ENCODE measurements at regions of chr17 and their contacts with region 1.

Region 1: GRCh38 chr17:50547035-50547735 is at the start of gene SPATA20:
- DNase-seq: peak; percentile 63
- H3K4me3 ChIP-seq: peak within 1 kb of the TSS; percentile 73
- H3K27ac ChIP-seq: no peak within 1 kb of the TSS
- H3K27me3 ChIP-seq: no peaks in the 10 kb centered on the region
- CTCF ChIP-seq: peak; percentile 95
- polyA plus RNA-seq, gene SPATA20: 17.1 and 25.1 TPM in 2 replicates

Region 2: DNA sequence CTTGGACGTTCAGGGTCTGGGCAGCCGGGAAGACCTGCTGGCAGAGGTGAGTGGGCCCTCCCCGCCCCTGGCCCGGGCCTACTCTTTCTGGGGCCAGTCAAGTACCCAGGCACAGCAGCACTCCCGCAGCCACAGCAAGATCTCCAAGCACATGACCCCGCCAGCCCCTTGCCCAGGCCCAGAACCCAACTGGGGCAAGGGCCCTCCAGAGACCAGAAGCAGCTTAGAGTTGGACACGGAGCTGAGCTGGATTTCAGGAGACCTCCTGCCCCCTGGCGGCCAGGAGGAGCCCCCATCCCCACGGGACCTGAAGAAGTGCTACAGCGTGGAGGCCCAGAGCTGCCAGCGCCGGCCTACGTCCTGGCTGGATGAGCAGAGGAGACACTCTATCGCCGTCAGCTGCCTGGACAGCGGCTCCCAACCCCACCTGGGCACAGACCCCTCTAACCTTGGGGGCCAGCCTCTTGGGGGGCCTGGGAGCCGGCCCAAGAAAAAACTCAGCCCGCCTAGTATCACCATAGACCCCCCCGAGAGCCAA is 78.9 kb after region 1 on chr17:
- CTCF ChIA-PET with region 1: interaction called, 134 read pairs
- POLR2A ChIA-PET with region 1: interaction called, 7 read pairs
- DNase-seq: peak; percentile 37
- H3K4me3 ChIP-seq: no peak overlapping the region
- H3K27ac ChIP-seq: no peak overlapping the region
- H3K27me3 ChIP-seq: peaks cover 6% of the 10 kb centered on the region
- CTCF ChIP-seq: peak; percentile 76

Region 3: DNA sequence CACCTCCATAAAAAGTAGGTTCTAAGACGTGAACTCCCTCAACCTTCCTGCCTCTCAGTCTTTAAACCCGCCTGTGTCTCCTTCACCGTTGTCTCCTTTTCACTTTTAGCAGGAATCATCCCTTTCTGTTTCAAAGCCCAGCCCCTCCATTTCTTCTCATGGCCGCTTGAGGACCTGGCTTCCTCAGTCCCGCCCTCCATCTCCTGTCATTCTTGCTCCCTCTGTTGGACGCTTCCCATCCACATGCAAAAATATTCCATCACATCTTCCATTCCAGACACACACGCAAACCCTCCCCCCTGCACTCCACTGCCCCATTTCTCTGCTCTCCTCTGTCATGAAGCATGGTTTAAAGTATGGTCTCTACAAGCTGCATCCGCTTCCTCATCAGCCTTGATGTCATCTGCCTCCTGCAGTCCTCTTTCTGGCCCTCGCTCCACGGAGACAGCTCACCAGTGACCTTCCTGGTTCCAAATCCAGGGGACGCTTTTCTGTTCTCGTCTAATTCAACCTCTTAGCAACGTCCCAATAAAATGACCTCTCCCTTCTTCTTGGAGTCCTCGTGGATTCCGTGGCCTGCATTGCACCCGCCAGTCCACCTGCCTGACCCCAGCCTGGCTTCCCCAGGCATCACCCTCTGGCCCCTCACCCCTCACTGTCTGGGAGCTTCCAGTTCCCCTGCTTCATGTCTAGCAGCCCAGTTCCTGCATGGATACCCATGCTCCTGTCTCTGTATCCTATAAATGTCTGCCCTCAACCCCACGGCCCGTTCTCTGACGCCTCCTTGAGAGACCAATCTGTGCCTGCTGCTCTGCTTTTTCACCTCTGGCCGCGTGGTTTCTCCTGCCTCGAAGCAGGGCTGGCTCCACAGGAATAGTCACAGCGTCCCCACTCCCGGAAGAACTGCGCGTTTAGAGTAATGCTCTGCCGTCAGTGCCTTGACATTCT is 134.4 kb after region 1 on chr17:
- CTCF ChIA-PET with region 1: interaction called, 28 read pairs
- POLR2A ChIA-PET with region 1: no interaction called
- DNase-seq: peak; percentile 55
- H3K4me3 ChIP-seq: no peak overlapping the region
- H3K27ac ChIP-seq: peak overlapping the region; percentile 21
- H3K27me3 ChIP-seq: no peaks in the 10 kb centered on the region
- CTCF ChIP-seq: peak; percentile 81

Region 4: GRCh38 chr17:50697663-50698274 is 150.6 kb after region 1 on chr17:
- CTCF ChIA-PET with region 1: interaction called, 192 read pairs
- POLR2A ChIA-PET with region 1: interaction called, 6 read pairs
- DNase-seq: no peak
- H3K4me3 ChIP-seq: no peak overlapping the region
- H3K27ac ChIP-seq: no peak overlapping the region
- H3K27me3 ChIP-seq: no peaks in the 10 kb centered on the region
- CTCF ChIP-seq: no peak

Region 5: DNA sequence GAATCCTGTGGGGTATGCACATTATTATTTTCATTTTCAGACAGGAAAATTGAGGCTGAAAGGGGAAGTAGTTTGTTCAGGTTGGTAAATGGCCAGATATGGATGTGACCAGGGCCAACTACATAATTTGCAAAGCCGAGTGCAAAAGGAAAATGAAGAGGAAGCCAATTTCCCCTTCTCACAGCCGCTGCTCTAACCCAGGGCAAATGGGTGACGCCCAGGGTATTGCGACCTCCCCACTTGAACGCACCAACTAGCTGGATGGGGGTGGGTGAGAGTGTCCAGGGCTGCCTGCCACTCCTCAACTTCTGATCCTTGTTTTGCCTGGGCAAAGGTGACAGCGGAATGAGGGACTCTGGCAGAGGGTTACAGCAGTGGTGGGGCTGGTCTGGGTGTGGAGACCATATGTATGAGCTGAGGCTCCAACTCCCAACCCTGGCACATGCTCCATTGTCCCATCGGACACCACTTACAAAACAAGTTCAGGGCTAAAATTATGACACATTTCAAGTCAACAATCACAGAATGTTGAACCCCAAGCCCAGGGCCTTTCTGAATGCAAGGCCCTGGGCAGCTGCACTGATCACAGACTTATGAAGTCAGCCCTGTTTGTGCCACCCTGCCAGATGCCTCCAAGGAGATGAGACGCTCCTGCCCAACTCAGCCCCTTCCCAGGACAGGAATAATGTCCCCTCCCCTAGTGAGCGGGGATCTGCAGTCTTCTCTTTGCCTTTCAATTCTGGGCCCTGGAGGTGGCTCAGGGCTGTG is 218.5 kb after region 1 on chr17:
- CTCF ChIA-PET with region 1: interaction called, 10 read pairs
- POLR2A ChIA-PET with region 1: no interaction called
- DNase-seq: no peak
- H3K4me3 ChIP-seq: no peak overlapping the region
- H3K27ac ChIP-seq: no peak overlapping the region
- H3K27me3 ChIP-seq: peaks cover 7% of the 10 kb centered on the region
- CTCF ChIP-seq: no peak

Measured in AG04450 (cell line).